Colonic mucosa (tissue), 4 donors: ENCODE measurements at regions of chr2 and their contacts with region 1.

Region 1: DNA sequence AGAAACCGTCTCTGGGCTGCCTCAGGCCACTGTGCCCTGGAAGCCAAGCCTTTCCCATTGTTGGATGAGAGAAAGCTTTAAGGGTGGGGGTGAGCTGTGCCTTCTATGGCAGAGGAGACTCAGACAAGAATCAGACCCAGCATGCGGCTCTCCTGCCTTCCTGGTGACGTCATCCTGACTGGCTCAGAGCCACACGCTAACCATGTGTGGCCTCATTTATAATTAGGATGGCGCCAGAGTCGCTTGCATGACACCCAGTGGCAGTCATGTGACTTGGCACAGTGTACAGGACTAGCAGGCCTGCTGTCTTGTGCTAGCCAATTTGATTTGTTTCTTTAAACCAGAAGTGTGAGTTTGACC is 99.2 kb downstream of the SH3BP4 start:
- DNase-seq: peak; percentile 92
- H3K4me3 ChIP-seq: no peak overlapping the region
- H3K27ac ChIP-seq: no peak overlapping the region
- H3K4me1 ChIP-seq: peaks cover 12% of the 10 kb centered on the region
- H3K27me3 ChIP-seq: no peaks in the 10 kb centered on the region
- CTCF ChIP-seq: no peak

Region 2: GRCh38 chr2:234881413-234882241 is 169.3 kb before region 1 on chr2:
- intact Hi-C with region 1: loop called (anchors 5 kb)
- DNase-seq: peak; percentile 95
- H3K4me3 ChIP-seq: no peak overlapping the region
- H3K27ac ChIP-seq: no peak overlapping the region
- H3K4me1 ChIP-seq: no peaks in the 10 kb centered on the region
- H3K27me3 ChIP-seq: no peaks in the 10 kb centered on the region
- CTCF ChIP-seq: peak; percentile 74

Region 3: GRCh38 chr2:234951664-234952269 is 99.2 kb before region 1 on chr2 and contains the start of gene SH3BP4:
- intact Hi-C with region 1: loop called (anchors 5 kb)
- DNase-seq: peak; percentile 89
- H3K4me3 ChIP-seq: peak within 1 kb of the TSS; percentile 65
- H3K27ac ChIP-seq: peak within 1 kb of the TSS; percentile 65
- H3K4me1 ChIP-seq: peaks cover 4% of the 10 kb centered on the region
- H3K27me3 ChIP-seq: no peaks in the 10 kb centered on the region
- CTCF ChIP-seq: no peak
- total RNA-seq, gene SH3BP4: 29.1 to 44.4 TPM

Region 4: GRCh38 chr2:235098269-235098668 is 47.3 kb after region 1 on chr2:
- intact Hi-C with region 1: no loop called
- DNase-seq: no peak
- H3K4me3 ChIP-seq: no peak overlapping the region
- H3K27ac ChIP-seq: no peak overlapping the region
- H3K4me1 ChIP-seq: no peaks in the 10 kb centered on the region
- H3K27me3 ChIP-seq: no peaks in the 10 kb centered on the region
- CTCF ChIP-seq: no peak